A673 (cell line): ENCODE measurements at regions of chr1 and their contacts with region 1.

Region 1: DNA sequence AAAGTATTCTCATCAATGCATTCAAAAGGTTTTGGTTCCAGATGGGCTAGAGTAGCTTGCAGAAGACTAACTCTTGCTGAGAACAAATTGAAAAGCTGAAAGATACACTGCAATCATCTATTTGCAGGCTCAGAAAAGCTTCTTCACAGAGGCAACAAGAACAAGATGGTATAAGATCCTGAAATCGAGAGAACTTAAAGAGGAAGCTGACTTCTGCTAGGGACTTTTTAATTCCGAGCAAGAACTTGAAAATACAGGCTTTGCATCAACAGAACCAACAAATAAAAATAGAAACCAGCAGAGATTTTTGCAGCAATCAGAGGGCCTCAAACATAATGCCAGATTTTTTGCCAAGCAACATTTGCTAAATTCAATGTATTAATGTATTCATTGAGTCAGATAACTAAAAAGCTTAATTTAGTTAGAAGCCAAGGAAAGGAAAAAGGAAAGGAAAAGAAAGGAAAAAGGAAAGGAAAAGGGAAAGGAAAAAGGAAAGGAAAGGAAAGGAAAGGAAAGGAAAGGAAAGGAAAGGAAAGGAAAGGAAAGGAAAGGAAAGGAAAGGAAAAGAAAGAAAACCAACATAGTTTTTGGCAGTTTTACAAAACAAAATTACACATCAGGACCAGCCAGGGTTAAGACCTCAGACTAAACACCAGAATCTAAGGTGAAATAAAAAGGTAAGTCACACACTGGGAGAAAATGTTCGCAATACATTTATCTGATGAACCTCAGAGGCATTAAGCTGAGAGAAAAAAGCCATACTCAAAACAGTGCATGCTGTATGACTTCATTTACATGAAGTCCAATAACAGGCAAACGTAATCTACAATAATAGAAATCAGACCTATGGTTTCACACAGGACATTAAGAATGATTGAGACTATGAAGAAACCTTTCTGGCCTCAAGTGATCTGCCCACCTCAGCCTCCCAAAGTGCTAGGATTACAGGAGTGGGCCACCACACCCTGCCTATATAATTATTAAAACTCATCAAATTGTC is 42.6 kb downstream of the FAF1 start:
- DNase-seq: no peak
- H3K4me3 ChIP-seq: no peak overlapping the region
- H3K27ac ChIP-seq: no peak overlapping the region
- H3K4me1 ChIP-seq: no peaks in the 10 kb centered on the region
- H3K27me3 ChIP-seq: no peaks in the 10 kb centered on the region
- CTCF ChIP-seq: no peak

Region 2: GRCh38 chr1:50898773-50899172 is 18.7 kb before region 1 on chr1:
- CTCF ChIA-PET with region 1: no interaction called
- POLR2A ChIA-PET with region 1: no interaction called
- intact Hi-C with region 1: no loop called
- DNase-seq: no peak
- H3K4me3 ChIP-seq: no peak overlapping the region
- H3K27ac ChIP-seq: no peak overlapping the region
- H3K4me1 ChIP-seq: no peaks in the 10 kb centered on the region
- H3K27me3 ChIP-seq: no peaks in the 10 kb centered on the region
- CTCF ChIP-seq: no peak

Region 3: GRCh38 chr1:50950396-50950795 is 33.0 kb after region 1 on chr1:
- CTCF ChIA-PET with region 1: interaction called, 10 read pairs
- POLR2A ChIA-PET with region 1: no interaction called
- intact Hi-C with region 1: no loop called
- DNase-seq: no peak
- H3K4me3 ChIP-seq: no peak overlapping the region
- H3K27ac ChIP-seq: no peak overlapping the region
- H3K4me1 ChIP-seq: no peaks in the 10 kb centered on the region
- H3K27me3 ChIP-seq: no peaks in the 10 kb centered on the region
- CTCF ChIP-seq: no peak

Region 4: DNA sequence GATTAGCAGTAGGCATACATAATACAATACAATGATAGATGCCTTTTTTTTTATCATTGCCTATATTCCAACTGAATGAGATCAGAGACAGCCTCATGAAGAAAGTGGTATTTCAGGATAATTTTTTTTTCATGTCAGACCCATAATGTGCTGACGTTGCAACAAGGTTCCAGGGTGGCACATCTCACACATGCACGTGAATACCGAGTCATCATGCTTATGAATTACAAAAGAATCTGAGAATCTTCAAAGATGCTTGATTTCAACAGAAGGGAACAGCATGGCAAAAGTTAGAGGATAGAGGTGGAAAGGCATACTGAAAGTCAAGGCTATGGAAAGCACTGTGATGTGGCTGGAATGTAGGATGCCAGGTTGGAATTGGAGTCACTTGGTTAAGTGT is 313.7 kb after region 1 on chr1:
- CTCF ChIA-PET with region 1: no interaction called
- POLR2A ChIA-PET with region 1: no interaction called
- intact Hi-C with region 1: no loop called
- DNase-seq: no peak
- H3K4me3 ChIP-seq: no peak overlapping the region
- H3K27ac ChIP-seq: no peak overlapping the region
- H3K4me1 ChIP-seq: peaks cover 13% of the 10 kb centered on the region
- H3K27me3 ChIP-seq: no peaks in the 10 kb centered on the region
- CTCF ChIP-seq: no peak